Astrocyte of the cerebellum (primary cell): ENCODE measurements at regions of chr22 and their contacts with region 1.

Region 1: GRCh38 chr22:34475886-34476285 is 555.6 kb upstream of the LARGE1 start:
- DNase-seq: no peak
- H3K4me3 ChIP-seq: no peak overlapping the region
- CTCF ChIP-seq: no peak

Region 2: DNA sequence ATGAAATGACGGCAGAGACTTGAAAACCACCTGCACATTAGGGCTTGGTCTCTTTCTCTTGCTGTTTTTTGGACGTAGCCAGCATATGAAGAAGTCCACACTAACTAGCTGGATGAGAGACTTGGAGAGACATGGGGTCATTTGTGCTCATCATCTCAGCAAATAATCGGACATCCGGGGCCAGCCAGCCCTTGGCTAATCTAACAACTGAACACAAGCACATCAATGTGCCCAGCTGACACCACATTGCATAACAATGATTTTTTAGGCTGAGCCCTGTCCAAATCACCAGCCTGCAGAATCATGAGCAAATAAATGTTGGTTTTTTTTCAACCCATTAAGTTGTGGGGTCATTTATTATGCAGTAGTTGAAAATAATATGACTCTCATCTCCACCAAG is 95.4 kb before region 1 on chr22:
- in situ Hi-C with region 1: loop called (anchors 5 kb)
- DNase-seq: no peak
- H3K4me3 ChIP-seq: no peak overlapping the region
- CTCF ChIP-seq: no peak

Region 3: DNA sequence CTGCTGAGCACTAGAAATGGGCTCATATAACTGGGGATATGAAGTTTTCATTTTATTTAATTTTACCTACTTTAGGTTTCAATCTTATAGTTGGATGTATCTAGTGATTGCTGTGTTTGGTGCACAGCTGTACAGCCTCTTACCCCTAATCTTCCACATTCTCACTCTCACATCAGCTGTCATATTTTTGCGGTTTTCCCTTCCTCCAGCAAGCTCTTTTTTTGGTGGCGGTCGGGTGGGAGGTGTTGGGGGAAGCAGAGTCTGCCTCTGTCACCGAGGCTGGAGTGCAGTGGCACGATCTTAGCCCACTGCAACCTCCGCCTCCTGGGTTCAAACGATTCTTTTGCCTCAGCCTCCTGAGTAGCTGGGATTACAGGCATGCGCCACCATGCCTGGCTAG is 144.9 kb after region 1 on chr22:
- in situ Hi-C with region 1: no loop called
- DNase-seq: no peak
- H3K4me3 ChIP-seq: no peak overlapping the region
- CTCF ChIP-seq: no peak